Mammary epithelial cell (primary cell): ENCODE measurements at regions of chr3 and their contacts with region 1.

Region 1: DNA sequence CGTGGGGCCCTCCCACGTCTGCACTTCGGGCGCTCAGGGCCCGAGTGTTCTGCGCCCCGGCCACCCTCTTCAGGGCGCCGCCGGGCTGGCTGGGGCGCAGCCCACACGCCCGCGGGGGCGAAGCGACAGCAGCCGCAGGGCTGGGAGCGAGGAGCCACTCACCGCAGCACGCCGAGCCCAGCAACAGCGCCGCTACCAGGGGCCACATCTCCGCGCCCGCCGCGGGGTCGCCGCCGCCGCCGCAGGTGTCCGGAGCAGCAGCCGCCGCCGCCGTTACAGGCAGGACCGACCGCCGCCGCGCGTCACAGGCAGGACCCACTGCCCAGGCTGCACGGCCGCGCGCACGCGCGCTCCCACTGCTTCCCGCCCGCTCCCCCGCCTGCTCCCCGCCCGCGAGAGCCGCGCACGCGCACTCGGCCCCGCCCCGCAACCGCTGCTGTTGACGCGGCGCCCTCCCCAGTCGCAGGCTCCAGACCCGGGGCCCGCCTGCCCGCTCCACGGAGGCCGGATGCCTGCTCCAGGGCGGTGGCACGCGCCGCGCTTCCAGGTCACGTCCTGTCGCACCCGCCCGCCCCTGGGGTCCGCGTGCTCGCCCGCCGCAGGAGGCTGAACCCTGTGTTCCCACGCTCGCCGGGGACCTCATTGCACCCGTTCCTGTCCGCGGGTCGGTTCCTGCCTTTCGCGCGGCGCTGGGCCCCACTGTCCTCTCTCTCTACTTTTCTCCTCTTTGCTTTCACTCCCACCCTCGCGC is at the start of gene CD47:
- DNase-seq: peak; percentile 86
- H3K4me3 ChIP-seq: peak within 1 kb of the TSS; percentile 83 to 99 (median 84)
- H3K27ac ChIP-seq: peak within 1 kb of the TSS; percentile 66
- H3K4me1 ChIP-seq: peaks cover 9% of the 10 kb centered on the region
- H3K27me3 ChIP-seq: no peaks in the 10 kb centered on the region
- CTCF ChIP-seq: no peak
- total RNA-seq, gene CD47: 65.0 to 68.5 TPM

Region 2: GRCh38 chr3:107938143-107938542 is 152.7 kb before region 1 on chr3:
- CTCF ChIA-PET with region 1: no interaction called
- dilution Hi-C with region 1: no loop called
- in situ Hi-C with region 1: no loop called
- intact Hi-C with region 1: loop called (anchors 2 kb)
- DNase-seq: peak; percentile 46
- H3K4me3 ChIP-seq: no peak overlapping the region
- H3K27ac ChIP-seq: no peak overlapping the region
- H3K4me1 ChIP-seq: peaks cover 5% of the 10 kb centered on the region
- H3K27me3 ChIP-seq: no peaks in the 10 kb centered on the region
- CTCF ChIP-seq: peak; percentile 41 to 72

Region 3: GRCh38 chr3:108006077-108006771 is 84.7 kb before region 1 on chr3:
- CTCF ChIA-PET with region 1: no interaction called
- dilution Hi-C with region 1: no loop called
- in situ Hi-C with region 1: no loop called
- intact Hi-C with region 1: loop called (anchors 5 kb)
- DNase-seq: peak; percentile 94
- H3K4me3 ChIP-seq: peak overlapping the region in 1 of 3 experiments; percentile 15
- H3K27ac ChIP-seq: peak overlapping the region; percentile 88
- H3K4me1 ChIP-seq: peaks cover 24% of the 10 kb centered on the region
- H3K27me3 ChIP-seq: no peaks in the 10 kb centered on the region
- CTCF ChIP-seq: no peak

Region 4: DNA sequence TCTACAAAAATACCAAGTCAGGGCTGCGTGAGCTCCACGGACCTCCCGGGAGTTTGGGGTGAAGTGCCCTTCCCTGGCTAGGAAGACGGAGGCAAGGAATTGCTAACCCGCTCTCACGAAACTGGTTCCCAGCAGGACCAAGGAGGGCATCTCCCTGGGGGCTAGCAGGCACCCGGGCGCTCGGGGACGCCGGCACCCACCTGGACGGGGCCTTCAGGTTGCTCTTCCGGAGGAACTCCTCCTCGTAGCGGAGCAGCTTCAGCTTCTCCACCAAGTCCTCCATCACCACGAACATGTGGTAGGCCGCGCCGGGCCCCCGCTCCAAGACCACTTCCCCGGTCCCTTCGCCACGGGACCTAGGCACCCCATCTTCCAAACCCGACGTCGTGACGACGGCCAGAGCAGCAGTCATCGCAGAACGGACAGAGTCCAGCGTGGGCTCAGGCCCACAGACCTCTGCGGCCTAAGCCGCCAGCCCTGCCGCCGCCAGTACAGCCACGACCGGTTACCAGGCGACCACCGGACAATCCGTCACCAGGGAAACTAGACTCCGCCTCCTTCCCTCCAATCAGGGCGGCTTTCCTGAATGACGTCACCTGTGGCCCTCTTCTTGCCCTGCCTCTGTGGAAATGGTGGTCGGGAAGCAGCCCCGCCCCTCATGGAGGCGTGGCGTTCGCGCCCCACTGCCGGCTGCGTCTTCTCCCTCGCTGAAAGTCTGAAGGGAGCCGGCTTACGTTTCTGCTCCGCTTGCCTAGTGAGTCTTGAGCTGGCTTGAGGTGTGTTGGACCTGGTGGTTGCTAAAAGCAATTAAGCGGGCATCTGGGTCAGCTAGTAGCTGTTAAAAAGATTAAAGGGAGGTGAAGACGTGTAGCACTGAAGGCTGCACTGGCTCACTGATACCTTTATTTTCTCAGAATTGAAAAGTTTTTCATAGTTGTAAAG is 131.3 kb after region 1 on chr3 and contains the start of gene IFT57:
- CTCF ChIA-PET with region 1: no interaction called
- dilution Hi-C with region 1: no loop called
- in situ Hi-C with region 1: no loop called
- intact Hi-C with region 1: loop called (anchors 2 kb)
- DNase-seq: peak; percentile 97
- H3K4me3 ChIP-seq: peak within 1 kb of the TSS; percentile 67 to 80 (median 71)
- H3K27ac ChIP-seq: peak within 1 kb of the TSS; percentile 94
- H3K4me1 ChIP-seq: peaks cover 21% of the 10 kb centered on the region
- H3K27me3 ChIP-seq: no peaks in the 10 kb centered on the region
- CTCF ChIP-seq: no peak
- total RNA-seq, gene IFT57: 32.8 to 37.6 TPM

Region 5: DNA sequence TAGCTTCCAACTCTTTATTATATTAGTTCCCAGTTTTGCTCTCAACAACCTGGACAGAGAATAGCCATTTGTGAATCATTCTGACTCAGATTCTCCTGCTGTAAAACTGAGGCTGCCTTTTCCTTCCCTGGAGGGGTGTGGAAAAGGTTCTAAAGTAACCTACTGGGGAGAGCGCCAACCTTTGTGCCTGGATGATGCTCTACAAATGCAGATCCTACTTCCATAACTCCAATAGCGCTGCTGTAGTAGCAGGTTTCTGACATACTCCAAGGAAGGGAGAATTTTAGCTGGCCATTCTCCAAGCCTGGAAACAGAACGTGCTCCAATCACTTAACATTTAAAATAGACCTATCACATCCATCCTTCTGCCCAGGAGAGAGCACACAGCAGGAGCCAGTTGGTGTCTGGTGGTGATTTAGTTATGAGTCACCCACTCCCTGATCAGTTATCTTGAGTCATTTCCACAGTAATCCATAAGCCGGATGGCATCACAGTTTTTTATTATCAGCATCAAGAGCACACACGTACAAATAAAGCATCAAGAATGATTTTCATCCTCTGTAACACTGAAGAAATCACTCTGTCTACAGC is 381.2 kb after region 1 on chr3:
- CTCF ChIA-PET with region 1: no interaction called
- dilution Hi-C with region 1: no loop called
- in situ Hi-C with region 1: no loop called
- intact Hi-C with region 1: loop called (anchors 5 kb)
- DNase-seq: peak; percentile 93
- H3K4me3 ChIP-seq: peak overlapping the region in 2 of 3 experiments; percentile 15 to 16
- H3K27ac ChIP-seq: peak overlapping the region; percentile 90
- H3K4me1 ChIP-seq: peaks cover 25% of the 10 kb centered on the region
- H3K27me3 ChIP-seq: no peaks in the 10 kb centered on the region
- CTCF ChIP-seq: no peak